Psoas muscle (tissue), 8 donors: ENCODE measurements at regions of chr5 and their contacts with region 1.

Region 1: DNA sequence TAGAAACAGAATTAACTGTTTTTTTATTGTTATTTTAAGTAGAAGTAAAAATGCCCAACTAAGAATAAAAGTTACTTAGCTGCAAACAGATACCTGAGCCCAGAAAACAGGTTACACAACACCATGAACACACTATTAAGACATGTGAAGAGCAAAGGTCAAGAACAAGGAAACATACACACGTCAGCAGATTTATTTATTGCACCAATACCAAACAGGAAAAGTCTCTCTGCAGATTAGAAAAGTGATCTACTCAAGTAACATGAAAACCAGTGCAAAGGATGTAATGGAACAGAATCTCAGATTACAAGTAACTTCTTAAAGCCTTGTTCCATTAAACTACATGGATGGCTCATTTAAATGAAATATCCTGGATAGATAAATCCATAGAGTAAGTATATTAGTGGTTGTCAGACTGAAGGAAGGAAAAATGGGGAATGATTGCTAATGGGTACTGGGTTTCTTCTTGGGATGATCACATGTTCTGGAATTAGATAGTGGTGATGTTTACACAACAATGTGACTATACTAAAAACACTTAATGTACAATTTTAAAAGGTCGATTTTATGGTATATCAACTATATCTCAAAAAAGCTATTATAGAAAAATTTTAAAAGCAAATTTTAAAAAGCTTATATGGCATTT is 6.1 kb downstream of the SAR1B start:
- DNase-seq: no peak
- ATAC-seq: peak; percentile 82 to 89 (median 86)
- H3K4me3 ChIP-seq: no peak overlapping the region
- H3K27ac ChIP-seq: peak overlapping the region; percentile 79
- H3K4me1 ChIP-seq: peaks cover 41% of the 10 kb centered on the region
- H3K27me3 ChIP-seq: no peaks in the 10 kb centered on the region
- CTCF ChIP-seq: no peak

Region 2: GRCh38 chr5:134446938-134447337 is 179.6 kb before region 1 on chr5:
- intact Hi-C with region 1: no loop called
- DNase-seq: no peak
- ATAC-seq: peak in 2 of 4 donors; percentile 2 to 9
- H3K4me3 ChIP-seq: no peak overlapping the region
- H3K27ac ChIP-seq: no peak overlapping the region
- H3K4me1 ChIP-seq: peaks cover 37% of the 10 kb centered on the region
- H3K27me3 ChIP-seq: no peaks in the 10 kb centered on the region
- CTCF ChIP-seq: no peak

Region 3: DNA sequence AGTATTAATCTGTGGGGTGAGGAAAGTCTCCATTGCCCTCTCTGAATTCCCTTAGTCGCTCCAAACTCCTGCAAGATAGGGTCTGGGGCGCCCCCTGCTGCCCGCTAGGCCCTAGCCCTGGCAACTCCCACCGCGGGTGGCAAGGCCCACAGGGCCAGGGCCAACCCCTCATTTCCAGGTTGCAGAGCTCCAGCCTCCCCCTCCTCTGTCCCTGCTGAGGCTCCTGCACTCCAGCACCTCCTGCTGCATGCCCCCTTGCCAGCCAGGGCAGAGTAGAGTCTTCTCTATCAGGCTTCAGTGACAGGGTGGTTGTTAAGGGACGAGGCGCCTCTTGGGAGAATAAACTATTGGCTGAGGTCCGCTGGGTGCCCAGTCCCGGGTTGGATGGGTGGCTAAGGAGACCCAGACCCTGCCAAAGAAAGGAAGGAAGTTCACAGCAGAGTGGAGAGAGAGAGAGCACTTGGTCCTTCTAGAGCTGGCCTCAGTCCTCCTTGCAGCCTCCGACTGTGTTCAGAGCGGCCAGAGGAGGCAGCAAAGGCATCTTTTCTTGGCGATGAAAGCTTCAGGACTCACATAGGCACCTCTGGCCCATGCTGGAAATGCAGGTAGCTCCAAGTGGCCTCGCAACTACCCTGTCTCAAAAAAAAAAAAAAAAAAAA is 39.5 kb before region 1 on chr5:
- intact Hi-C with region 1: loop called in 1 of 2 experiments (anchors 1 kb)
- DNase-seq: peak; percentile 85 to 90
- ATAC-seq: peak; percentile 73 to 83 (median 79)
- H3K4me3 ChIP-seq: no peak overlapping the region
- H3K27ac ChIP-seq: peak overlapping the region; percentile 30
- H3K4me1 ChIP-seq: peaks cover 31% of the 10 kb centered on the region
- H3K27me3 ChIP-seq: no peaks in the 10 kb centered on the region
- CTCF ChIP-seq: peak; percentile 64